Right cardiac atrium (tissue), 5 donors: ENCODE measurements at regions of chr5 and their contacts with region 1.

Region 1: DNA sequence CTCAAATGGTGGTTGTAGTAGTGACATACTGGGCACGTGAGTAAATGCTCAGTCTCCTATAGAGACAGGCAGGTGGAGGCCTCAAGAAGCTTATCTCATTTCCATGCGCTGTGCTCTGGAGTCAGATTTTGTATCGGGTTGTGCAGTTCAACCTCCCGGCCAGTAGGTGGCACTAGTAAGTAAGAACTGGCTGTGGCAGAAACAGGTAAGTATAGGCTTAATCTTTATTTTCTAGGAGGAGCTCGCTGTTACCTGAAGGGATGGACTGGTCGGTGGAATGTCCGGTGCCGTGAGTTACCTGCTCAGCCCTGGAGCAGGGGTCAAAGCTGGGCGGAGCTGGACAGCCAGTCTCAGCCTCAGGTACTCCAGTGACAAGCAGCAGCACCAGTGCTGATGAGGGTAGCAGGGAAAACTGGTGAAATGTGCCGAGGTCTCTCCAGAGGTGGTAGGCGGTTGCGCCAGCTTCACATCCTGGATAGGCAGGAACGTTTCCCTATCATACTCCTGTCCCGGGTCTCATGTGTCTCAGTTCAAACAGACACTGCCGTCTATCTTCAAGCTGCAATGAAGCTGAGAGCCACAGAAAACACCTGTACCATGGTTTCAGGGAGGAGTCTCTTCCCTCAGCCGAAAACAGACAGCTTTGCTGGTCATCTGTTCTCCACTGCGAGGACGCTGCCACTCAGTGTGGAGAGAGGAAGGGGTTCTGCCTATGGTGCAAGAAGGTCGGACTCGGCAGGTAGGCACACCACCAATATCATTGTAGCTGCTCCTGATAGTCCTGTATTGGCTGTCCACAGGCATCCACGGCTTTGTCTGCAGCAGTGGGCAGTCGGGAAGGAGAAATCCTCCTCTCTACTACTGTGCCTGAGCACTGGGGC is 880.3 kb upstream of the SEMA6A start:
- DNase-seq: peak; percentile 10 to 62 (median 49)
- ATAC-seq: peak; percentile 55 to 80
- H3K4me3 ChIP-seq: peak overlapping the region; percentile 30
- H3K27ac ChIP-seq: no peak overlapping the region
- H3K4me1 ChIP-seq: no peaks in the 10 kb centered on the region
- H3K27me3 ChIP-seq: no peaks in the 10 kb centered on the region

Region 2: DNA sequence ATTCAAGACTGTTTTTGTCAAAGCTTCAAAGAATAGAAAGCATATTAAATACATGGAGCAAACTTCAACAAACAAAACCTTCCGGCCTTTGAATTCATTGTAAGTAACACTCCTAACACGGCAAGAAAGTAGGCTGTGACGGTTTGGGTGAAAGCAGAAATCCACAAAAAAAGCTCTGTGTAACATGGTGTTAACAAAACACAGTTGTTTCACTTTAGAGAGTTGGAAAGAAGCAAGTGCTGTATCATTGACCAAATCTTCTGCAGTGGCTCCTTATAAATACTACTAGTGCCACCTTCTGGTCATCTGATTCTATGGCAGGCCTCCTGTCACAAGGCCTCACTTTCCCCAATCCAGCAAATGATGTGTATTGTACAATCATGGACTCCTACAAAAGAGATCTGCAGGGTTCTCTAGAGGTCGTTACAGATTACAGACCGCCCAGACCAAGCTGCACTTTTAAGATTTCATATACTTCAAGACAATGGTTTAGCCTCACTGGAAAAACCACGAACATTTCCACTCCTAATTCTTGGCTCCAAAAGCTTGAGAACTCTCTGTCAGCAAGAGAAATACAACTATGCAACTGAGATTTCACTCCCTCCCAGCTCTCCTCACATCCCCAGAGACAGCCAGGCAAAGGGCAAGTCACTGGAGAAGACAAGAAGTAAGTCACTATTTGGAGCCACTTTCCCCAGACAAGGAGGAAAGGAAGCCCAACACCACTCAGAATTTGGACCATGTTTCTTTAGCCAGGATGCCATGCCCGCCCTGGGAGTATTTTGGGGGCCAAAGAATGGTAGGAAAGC is 1337.2 kb after region 1 on chr5:
- intact Hi-C with region 1: loop called in 1 of 4 experiments (anchors 5 kb)
- DNase-seq: peak in 1 of 3 donors; percentile 14
- ATAC-seq: peak; percentile 87 to 93
- H3K4me3 ChIP-seq: peak overlapping the region; percentile 20
- H3K27ac ChIP-seq: peak overlapping the region; percentile 27
- H3K4me1 ChIP-seq: peaks cover 2% of the 10 kb centered on the region
- H3K27me3 ChIP-seq: no peaks in the 10 kb centered on the region